ENCODE measurements at regions of chr19 and their contacts with region 1.

Region 1: DNA sequence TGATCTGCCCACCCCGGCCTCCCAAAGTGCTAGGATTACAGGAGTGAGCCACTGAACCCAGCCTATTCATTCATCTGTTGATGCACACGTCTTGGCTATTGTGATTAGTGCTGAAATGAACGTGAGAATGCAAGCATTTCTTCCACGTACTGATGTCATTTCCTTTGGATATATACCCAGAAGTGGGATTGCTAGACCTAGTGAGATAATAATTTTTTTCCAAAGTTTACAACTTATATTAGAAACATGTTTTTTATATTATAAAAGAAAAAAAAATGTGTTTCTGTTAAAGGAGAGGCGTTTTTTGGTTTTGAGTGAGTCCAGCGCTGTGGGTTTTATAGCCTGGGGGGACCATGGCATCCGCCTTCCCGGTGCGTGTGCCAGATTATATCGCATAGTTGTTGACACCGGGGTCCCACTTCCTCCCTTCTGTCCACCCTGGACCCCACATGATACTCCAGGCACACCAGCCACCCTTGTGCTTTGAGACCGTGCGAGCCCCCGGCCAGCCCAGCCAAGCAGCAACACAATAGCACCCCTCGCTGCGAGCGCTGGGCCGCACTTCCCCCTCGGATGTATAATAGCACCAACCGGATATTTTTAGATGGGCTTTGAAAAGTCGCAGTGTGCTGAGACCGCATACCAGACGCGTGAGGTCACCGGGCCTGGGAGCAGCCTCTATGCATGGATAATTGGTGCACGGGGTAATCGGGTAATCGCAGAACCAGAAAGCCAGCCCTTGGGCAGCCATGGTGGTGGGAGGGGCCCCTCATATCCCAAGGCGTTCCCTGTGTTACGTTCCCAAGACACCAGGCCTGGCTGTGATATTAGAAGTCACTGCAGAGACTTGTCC is 59.6 kb downstream of the MYO9B start:
- DNase-seq: peak; percentile 95
- ATAC-seq: peak; percentile 87

Region 2: GRCh38 chr19:17075035-17075863 is 60.0 kb before region 1 on chr19 and contains the starts of genes HAUS8 and MYO9B:
- intact Hi-C with region 1: loop called (anchors 5 kb)
- DNase-seq: peak; percentile 99
- ATAC-seq: peak; percentile 93
- total RNA-seq, gene HAUS8: 4.5 TPM
- total RNA-seq, gene MYO9B: 32.4 TPM